Cardiac septum (tissue), 1 donor: ENCODE measurements at regions of chr4 and their contacts with region 1.

Region 1: DNA sequence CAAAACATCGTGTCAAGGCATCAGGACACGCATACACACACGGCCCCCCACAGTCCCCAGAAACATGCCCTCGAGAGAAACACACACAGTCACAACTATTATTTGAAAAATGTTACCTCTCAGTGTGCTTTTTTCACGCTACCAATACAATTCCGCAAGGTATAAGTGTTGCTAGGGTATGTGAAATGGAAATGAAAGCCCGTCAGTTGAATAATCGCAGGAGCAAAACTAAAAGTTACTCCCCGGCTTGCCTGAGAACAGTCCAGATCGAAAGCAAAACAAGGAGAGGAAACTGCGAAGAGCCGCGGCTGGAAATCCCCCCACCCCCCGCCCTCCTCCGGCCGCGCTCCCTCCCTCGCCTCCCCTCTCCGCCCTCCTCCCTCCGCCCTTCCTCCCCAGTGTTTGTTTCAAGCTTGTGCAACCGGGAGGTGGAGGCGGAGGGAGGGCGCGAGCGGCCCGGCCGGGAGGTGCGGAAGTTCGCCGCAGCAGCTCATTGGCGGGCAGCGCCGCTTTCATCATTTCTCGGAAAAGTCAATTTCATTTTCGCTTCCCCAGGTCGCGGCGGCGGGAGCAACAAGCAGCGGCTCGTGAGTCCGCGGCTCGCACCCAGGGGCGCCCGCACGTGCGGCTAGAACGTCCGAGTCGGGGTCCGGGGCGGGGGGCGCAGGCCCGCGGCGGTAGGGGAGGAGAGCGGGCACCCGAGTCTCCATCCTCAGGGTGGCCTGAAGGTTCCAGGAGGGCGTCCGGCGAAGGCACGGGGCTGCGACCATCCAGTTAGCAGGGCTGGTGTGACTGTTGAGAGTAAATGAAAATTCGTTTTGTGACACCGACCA is at the start of gene IRF2:
- DNase-seq: peak; percentile 98
- total RNA-seq, gene IRF2: 22.4 TPM

Region 2: DNA sequence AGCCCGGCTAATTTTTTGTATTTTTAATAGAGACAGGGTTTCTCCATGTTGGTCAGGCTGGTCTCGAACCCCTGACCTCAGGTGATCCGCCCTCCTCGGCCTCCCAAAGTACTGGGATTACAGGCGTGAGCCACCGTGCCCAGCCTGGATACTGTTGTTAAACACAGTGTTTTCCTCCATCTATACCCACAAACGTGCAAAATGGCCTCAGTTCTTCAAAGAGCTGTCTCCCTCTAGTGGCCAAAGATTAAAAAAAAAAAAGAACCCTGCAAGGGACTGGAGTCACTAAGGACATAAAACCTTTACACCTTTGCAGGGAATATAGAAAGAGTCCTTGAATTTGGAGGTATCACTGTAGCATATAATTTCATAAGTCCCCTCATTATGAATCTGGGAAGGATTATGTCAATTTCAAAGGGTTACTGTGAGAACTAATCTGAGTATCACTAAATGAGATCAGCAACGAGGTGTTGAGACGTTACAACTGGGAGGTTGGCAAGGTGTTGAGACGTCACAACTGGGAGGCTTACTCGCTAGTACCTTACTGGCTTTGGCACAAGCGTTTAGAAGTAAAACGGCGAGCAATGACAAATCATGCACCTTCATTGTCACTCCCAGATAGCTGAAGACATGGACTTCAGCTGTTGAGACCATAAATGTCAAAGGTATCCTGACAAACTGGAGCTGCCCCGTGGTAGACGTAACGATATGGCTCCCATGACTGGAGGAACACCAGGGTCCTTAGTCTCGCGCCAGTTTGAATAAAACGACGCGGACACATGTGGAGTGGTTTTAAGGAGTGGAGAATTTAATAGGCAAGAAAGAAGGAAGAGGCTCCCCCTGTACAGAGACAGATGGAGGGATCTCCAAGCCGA is 223.4 kb before region 1 on chr4:
- intact Hi-C with region 1: no loop called
- DNase-seq: no peak

Region 3: GRCh38 chr4:184287697-184288255 is 186.7 kb before region 1 on chr4:
- intact Hi-C with region 1: loop called (anchors 5 kb)
- DNase-seq: no peak

Region 4: DNA sequence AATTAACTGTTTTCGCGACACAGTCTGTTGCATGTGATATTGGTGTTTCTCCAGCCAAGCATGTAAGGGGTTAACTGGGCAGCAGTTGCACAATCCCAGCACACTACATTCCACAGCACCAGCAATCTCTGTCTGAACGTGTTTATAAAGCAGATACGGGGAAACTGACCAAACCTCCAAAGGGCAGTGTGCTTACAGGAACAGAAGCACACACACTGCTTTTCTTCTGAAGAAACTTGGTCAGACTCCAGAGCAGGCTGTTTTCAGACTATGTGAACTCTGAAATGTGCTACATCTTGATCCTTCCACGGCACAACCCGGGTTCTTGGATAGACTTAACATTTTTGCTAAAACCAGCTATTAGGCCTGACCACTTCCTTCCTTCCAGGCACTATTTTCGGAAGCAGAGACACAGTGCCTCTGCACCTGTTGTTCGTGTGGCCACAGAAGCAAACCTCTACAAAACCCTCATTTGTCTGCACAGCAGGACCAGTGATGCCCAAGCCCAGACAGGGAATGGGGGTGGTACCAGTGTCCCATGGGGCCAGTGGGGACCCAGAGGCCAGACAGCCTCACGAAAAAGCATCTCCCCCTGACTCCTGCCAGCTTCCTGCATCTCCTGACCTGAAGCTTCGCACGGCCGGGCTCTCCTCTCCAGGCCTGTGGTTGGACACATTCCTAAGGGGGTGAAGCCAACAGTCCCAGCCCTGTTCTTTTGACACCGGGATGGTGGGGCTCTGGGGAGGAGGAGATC is 90.2 kb before region 1 on chr4:
- intact Hi-C with region 1: loop called (anchors 2 kb)
- DNase-seq: no peak

Region 5: DNA sequence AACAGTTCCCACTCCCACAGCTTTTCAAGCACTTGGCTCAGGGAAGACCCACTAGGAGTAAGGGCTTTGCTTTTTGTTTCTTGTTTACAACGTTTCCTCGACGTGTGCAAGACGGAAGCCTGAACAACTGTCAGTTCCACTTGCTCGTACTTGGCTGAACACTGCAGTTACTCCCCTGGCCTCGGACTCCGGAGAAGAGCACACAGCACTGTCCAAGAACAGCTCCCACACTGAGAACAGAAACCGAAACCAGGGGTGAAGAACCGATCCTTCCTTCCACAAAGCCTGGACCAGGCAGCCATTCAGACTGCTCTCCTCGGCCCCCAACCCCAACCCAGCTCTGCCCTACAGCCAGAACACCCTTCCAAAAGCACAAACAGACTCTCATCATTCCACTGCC is 25.7 kb before region 1 on chr4:
- intact Hi-C with region 1: loop called (anchors 2 kb)
- DNase-seq: peak; percentile 80

Region 6: DNA sequence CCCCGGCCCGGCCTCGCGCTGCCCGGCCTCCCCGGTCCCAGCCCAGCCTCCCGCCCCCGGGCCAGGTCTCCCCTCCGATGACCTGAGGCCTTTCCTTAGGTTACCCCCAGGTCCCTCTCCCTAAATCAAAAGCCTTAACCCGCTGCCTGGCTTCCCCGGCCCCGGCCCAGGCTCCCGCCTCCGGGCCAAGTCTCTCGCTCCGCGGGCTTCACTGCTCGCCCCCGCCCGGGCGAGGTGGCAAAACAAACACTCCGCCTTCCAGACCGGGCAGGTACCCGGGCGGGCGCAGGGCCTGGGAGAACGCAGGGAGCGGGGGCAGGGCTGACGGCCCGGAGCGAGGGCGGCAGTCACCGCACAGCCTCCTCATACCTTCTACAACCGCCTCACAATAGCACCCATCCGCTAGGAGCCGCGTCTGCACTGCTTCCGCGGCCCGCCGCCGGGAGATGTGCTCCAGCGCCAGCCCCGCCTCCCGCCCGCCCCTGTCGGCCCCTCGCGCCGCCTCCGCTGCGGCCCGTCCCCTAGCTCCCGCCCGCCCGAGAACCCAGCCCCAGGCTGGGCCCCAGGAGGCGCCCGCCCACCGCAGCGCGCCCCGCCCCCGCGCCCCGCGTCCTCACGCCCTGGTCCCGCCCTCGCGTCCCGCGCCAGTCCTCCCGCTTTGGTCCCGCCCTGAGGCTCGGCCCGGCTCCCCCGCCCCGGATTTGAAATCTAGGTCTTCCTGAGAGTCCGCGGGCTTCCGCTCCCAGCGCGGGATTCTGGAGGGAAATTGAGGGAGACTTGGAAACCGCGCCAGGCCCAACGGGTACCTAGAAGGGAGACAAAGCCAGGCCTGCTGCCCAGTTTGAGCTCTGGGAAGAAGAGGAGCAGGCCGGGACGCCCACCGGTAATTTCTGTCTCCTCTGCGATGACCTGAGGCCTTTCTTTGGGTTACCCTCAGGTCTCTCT is 174.8 kb after region 1 on chr4 and contains the starts of genes CASP3 and PRIMPOL:
- intact Hi-C with region 1: loop called (anchors 5 kb)
- DNase-seq: peak; percentile 99
- total RNA-seq, gene CASP3: 21.7 TPM
- total RNA-seq, gene PRIMPOL: 8.3 TPM

Region 7: GRCh38 chr4:184695178-184695896 is 220.9 kb after region 1 on chr4:
- intact Hi-C with region 1: no loop called
- DNase-seq: no peak

Region 8: DNA sequence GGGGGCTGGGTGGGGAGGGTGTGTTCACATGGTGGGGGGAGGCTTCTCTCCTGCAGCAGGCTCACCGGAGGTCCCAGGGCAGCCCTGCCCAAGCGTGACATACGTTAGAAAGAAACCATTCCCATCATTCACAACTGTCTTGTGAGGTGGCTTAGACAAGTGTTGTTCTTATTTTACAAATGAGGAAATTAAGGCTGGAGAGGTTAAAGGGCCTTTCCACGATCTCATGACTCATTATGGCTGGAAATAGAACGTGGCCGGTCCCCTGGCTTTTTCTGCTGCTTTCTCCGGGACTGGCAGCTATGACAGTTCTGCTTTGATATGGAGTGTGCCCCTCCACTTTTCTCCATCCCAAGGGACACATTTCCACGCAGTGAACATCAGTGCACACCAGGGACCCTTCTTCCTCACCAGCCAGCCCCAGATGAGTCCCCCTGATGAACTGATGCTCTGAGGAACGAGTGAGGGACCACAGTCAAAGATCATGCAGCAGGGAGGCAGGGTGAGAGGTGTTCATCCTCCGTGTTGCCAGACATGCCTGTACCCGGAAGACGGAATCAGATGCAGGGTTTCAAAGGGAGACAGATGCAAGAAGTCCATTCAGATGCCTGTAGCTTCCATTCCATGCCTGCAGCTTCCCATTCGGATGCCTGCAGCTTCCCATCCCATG is 415.3 kb after region 1 on chr4:
- intact Hi-C with region 1: no loop called
- DNase-seq: no peak